Lower leg skin (tissue), 4 donors: ENCODE measurements at regions of chr12 and their contacts with region 1.

Region 1: GRCh38 chr12:109844983-109845823 is 12.0 kb upstream of the TRPV4 start:
- DNase-seq: peak; percentile 71 to 96
- H3K4me3 ChIP-seq: no peak overlapping the region
- CTCF ChIP-seq: peak in 1 of 3 donors; percentile 76
- POLR2A ChIP-seq: no peak

Region 2: DNA sequence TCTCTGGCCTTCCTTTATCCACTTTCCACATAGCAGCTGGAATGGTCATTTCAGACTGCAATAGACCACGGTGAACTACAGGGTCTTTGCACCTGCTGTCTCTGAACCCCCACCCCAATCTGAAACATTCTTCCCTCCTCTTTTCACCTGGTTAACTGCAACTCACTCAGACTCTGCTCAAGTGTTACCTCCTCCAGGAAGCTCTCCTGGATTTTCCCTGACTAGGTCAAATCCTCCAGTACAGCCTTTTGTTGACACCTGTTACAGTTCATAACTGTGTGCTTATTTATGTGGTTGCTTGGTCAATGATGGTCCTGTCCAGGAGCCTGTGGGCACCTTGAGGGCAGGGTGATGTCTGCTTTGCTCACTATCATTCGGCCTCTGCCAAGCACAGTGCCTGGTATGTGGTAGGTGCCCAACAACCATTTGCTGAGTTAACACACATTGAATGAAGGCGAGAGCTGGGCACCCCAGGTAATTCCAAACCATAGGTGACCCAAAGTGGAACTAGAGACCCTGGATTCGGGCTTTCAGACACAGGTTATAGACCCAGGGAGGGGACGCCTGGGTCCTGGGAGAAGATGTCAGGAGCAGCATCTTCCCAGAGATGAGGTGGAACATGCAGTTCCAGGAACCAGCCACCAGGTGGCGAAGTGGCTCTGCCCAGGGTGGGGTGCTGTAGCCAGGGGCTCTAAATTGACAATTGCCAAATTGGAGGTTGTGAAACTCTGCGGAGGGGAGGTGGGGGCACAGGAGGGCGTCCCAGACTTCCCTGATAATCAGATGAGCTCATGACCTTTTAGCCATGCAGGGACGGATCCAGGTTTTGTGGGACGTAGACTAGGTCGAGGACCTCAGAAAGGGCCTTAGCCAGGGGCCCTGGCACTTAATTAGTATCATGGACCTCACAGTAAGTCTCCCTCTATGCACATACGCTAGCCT is 40.1 kb before region 1 on chr12:
- intact Hi-C with region 1: loop called (anchors 1 kb)
- DNase-seq: peak; percentile 50 to 94
- H3K4me3 ChIP-seq: no peak overlapping the region
- CTCF ChIP-seq: peak in 1 of 3 donors; percentile 76
- POLR2A ChIP-seq: no peak

Region 3: DNA sequence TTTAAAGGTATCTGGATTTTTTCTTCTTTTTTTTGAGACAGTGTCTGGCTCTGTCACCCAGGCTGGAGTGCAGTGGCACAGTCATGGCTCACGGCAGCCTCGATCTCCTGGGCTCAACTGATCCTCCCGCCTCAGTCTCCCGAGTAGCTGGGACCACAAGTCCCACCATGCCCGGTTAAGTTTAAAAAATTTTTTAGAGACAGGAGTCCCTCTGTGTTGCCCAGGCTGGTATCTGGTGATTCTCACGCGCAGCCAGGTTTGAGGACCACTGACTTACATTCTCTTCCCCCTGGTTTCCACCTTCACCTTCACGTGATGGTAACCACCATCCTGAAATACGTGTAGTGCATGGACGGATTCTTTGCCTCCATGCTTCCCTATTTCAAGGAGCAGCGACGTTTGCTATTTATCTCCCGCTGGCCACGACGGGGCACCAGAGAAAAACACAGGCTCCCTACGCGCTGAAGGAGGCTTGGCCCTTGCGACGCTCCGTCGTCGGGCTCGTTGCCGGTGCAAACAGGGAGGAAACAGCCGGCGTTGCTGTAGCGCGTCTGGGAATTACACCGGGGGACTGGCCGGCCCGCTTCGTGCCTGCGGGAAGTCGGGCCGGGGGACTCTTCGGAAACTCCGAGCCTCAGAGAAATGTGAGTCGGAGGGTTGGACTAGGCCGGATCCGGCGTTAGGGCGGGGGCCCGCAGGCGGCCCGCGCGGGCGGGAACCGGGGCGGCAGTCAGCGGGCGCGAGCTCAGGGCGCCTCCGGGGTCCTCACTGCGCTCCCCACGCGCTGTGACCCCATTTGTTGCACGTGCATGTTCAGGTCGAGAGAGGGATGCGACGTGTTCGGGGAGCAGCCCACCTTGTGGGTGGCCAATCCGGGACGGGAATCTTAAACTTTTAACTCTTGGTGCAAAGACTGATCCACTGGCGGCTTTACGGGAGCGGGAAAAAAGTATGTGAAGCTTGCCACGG is 54.9 kb after region 1 on chr12 and contains the start of gene TCHP:
- intact Hi-C with region 1: no loop called
- DNase-seq: peak; percentile 85 to 96
- H3K4me3 ChIP-seq: peak within 1 kb of the TSS; percentile 48
- CTCF ChIP-seq: no peak
- POLR2A ChIP-seq: no peak
- total RNA-seq, gene TCHP: 28.3 to 61.5 (median 36.3) TPM